ENCODE measurements at regions of chr10 and their contacts with region 1.

Region 1: GRCh38 chr10:90920986-90921666 is at the start of gene ANKRD1:
- DNase-seq: peak; percentile 49
- H3K4me3 ChIP-seq: no peak within 1 kb of the TSS
- CTCF ChIP-seq: no peak

Region 2: DNA sequence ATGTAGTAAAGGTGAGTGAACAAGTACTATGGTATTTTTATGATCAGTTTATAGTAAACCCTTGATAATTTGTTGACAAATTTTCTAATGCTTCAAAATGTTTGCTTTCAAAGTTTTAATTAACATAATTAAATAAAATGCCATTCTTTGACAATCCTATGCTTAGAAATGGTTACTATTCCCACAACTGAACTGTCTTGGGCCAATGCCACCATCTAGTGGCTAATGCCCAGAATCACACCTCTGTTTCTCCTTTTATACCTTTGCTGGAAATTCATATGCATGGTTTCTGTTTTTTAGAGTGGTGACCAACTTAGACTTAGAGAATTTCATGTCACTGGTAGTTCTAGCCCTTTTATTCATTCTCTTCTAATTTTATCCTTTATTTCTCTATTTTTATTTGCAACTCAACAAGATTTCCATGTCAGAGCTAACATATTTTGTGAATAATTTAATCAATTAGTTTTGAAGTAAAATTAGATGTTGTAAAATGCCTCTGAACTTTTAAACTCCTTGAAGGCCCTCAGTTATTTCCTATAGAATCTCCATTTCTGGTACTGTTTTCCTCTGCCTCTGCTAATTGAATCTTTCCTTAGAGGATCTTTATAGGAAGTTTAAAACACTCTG is 330.4 kb after region 1 on chr10:
- in situ Hi-C with region 1: loop called (anchors 25 kb)
- DNase-seq: peak; percentile 43
- H3K4me3 ChIP-seq: no peak overlapping the region
- CTCF ChIP-seq: peak; percentile 83

Measured in astrocyte of the cerebellum (primary cell).